KBM-7 (cell line): ENCODE measurements at regions of chr2 and their contacts with region 1.

Region 1: DNA sequence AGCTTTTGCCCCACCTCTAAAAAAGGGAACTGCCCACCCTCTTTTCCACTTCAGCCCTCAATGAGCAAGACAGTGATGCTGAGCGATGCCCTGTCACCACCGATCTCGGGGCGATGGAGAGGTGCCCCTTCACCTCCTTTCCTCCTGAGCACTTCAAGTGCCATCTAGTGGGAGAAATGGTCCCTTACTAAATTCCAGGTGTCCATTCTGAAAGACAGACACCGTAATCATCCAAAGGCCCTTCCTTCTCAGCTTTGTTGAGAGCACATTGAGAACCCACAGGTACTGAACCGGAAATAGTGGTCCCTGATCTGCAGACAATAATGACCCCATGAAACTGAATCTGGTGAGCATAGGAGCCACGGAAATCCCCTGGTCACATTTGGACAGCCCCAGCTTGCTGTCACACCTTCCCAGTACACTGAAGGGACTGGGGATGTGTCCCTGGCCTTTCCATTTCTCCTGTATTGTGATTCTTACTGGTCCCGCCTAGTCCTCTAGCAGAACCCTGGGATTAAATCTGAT is 38.5 kb downstream of the KCTD18 start:
- DNase-seq: peak; percentile 39

Region 2: GRCh38 chr2:199979832-199980628 is 491.4 kb before region 1 on chr2:
- in situ Hi-C with region 1: loop called (anchors 10 kb)
- DNase-seq: peak; percentile 76